H1 (cell line): ENCODE measurements at regions of chr22 and their contacts with region 1.

Region 1: GRCh38 chr22:36757668-36758211 is 18.2 kb downstream of the IFT27 start:
- DNase-seq: peak; percentile 63 to 92
- H3K4me3 ChIP-seq: no peak overlapping the region
- H3K27ac ChIP-seq: no peak overlapping the region
- H3K4me1 ChIP-seq: peaks cover 0 to 7% (median 0%) of the 10 kb centered on the region in 4 experiments; a peak in 2 of 7 replicates
- H3K27me3 ChIP-seq: peaks cover 0 to 3% (median 0%) of the 10 kb centered on the region in 4 experiments; a peak in 2 of 7 replicates
- CTCF ChIP-seq: peak; percentile 90 to 95 (median 95)
- EP300 ChIP-seq: no peak
- POLR2A ChIP-seq: no peak
- RAD21 ChIP-seq: peak; percentile 83 to 91

Region 2: DNA sequence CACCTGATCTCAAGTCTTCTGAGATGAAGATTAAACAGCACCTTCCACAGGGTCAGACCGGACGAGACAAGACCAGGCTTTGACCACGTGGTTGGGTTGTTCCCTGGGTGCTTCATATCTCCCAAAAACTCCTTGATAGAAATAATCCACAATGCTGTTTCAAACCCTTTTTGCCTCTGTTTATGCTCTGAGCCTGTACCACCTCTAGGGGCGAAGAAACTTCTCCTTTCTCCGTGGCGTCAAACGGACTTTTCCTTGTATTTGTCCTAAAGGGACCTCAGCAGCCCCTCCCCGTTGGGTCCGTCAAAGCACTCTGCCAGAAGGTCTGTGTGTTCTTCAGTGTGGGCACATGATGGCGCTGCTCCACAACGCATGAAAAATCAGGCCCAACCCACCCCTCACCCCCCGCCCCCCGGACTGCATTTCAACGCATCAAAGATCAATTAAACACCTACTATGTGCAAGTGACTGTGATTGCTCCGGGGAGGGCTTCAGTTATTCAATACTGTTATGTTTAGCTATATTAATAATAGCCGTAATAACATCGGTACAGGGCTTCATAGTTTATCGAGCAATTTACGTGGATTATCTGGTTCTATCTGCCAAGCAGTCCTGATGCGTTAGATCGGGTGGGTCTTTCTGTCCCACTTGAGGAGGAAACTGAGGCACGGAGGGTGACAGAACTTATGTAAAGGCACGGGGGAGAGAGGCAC is 211.5 kb before region 1 on chr22:
- CTCF ChIA-PET with region 1: interaction called, 43 read pairs
- POLR2A ChIA-PET with region 1: no interaction called
- DNase-seq: peak; percentile 51 to 65
- H3K4me3 ChIP-seq: peak overlapping the region in 1 of 4 experiments; percentile 18; a peak in 2 of 8 replicates
- H3K27ac ChIP-seq: no peak overlapping the region
- H3K4me1 ChIP-seq: peaks cover 0 to 12% (median 3%) of the 10 kb centered on the region in 4 experiments; a peak in 4 of 7 replicates
- H3K27me3 ChIP-seq: no peaks in the 10 kb centered on the region; a peak in 2 of 7 replicates
- CTCF ChIP-seq: peak; percentile 78 to 89 (median 81)
- EP300 ChIP-seq: no peak
- POLR2A ChIP-seq: no peak
- RAD21 ChIP-seq: peak; percentile 89 to 90

Region 3: DNA sequence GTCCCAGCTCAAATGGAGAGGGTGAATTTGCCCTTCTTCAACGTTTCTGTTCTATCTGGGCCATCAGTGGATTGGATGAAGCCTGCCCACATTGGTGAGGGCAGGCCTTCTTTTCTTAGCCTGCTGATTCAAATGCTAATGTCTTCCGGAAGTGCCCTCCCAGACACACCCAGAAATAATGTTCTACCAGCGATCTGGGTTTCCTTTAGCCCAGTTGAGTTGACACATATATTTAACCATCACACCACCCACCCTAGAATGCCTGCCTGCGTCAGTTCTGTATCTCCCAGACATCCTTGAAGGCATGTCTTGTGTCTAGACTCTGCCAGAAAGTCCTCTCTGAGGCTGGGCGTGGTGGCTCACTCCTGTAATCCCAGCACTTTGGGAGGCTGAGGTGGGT is 88.9 kb before region 1 on chr22:
- CTCF ChIA-PET with region 1: interaction called, 12 read pairs
- POLR2A ChIA-PET with region 1: no interaction called
- DNase-seq: no peak
- H3K4me3 ChIP-seq: no peak overlapping the region
- H3K27ac ChIP-seq: no peak overlapping the region
- H3K4me1 ChIP-seq: peaks cover 0 to 8% (median 0%) of the 10 kb centered on the region in 4 experiments; a peak in 1 of 7 replicates
- H3K27me3 ChIP-seq: no peaks in the 10 kb centered on the region
- CTCF ChIP-seq: no peak
- EP300 ChIP-seq: no peak
- POLR2A ChIP-seq: no peak
- RAD21 ChIP-seq: no peak

Region 4: DNA sequence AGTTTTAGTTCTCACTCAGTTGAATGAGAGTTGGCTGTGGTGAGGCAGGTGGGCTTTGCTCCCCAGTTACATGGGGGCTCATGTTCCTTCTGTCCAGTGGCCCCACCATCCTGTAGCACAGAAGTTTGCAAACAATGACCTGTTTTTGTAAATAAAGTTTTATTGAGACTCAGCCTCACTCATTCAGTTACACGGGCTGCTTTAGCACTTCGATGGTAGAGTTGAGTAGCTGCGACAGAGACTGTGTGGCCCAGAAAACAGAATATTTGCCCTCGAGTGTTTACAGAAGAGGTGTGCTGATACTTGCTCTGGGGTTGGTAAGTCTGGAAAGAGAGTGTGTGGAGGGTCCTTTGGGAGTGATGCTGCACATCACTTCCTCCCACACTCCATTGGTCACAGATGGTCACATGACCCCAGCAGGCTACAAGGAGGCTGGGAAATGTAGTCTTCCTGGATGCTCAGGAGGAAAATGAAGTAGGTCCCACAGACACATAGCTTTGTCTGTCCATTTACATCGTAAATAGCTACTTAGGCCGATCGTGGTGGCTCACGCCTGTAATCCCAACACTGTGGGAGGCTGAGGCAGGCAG is 16.4 kb before region 1 on chr22:
- CTCF ChIA-PET with region 1: interaction called, 60 read pairs
- POLR2A ChIA-PET with region 1: interaction called, 4 read pairs
- DNase-seq: no peak
- H3K4me3 ChIP-seq: no peak overlapping the region
- H3K27ac ChIP-seq: no peak overlapping the region
- H3K4me1 ChIP-seq: no peaks in the 10 kb centered on the region
- H3K27me3 ChIP-seq: peaks cover 0 to 7% (median 1%) of the 10 kb centered on the region in 4 experiments; a peak in 1 of 7 replicates
- CTCF ChIP-seq: no peak
- EP300 ChIP-seq: no peak
- POLR2A ChIP-seq: no peak
- RAD21 ChIP-seq: no peak

Region 5: DNA sequence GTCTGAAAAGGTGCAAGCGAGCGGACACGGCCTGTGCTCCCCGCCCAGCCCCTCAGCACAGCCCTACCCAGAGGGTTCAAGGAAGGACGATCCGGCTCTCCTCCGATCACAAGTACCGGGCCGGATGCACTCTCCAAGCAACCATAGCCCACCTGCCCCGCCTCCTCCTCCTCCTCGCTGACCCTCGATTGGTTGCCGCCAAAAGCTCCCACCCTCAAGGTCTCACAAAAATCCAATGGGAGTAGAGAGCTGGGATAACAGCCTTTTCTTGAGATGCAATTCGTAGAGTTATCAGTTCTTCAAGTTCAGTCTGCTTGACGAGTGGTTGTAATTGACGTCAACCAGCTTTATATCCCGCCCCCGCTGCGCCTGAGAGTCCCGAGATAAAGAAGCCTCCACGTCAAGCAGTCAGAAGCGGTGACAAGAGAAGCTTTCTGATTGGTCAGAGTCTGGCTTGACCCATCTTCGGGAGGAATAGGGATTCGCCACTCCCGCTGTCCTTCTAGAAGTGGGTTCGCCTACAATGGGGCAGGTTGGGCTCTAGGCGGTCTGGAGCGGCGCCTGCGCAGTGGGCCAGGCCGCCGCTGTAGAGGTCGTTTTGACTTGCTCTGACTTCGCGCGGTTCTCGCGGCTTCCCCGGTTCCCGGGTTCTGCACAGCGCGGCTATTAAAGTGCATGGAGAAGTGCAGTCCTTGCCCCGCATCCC is 18.4 kb after region 1 on chr22 and contains the start of gene IFT27:
- CTCF ChIA-PET with region 1: interaction called, 39 read pairs
- POLR2A ChIA-PET with region 1: interaction called, 3 read pairs
- DNase-seq: peak; percentile 92 to 98
- H3K4me3 ChIP-seq: peak within 1 kb of the TSS; percentile 80 to 96 (median 85)
- H3K27ac ChIP-seq: no peak within 1 kb of the TSS
- H3K4me1 ChIP-seq: peaks cover 0 to 4% (median 4%) of the 10 kb centered on the region in 4 experiments; a peak in 6 of 7 replicates
- H3K27me3 ChIP-seq: peaks cover 0 to 10% (median 7%) of the 10 kb centered on the region in 4 experiments; a peak in 4 of 7 replicates
- CTCF ChIP-seq: no peak
- EP300 ChIP-seq: no peak
- POLR2A ChIP-seq: peak in 1 of 2 experiments; percentile 59; a peak in 1 of 3 replicates
- RAD21 ChIP-seq: no peak
- total RNA-seq, gene IFT27: 44.0 and 46.2 TPM in 2 replicates

Region 6: GRCh38 chr22:36828815-36829214 is 71.1 kb after region 1 on chr22:
- CTCF ChIA-PET with region 1: no interaction called
- POLR2A ChIA-PET with region 1: no interaction called
- DNase-seq: no peak
- H3K4me3 ChIP-seq: no peak overlapping the region
- H3K27ac ChIP-seq: no peak overlapping the region
- H3K4me1 ChIP-seq: no peaks in the 10 kb centered on the region
- H3K27me3 ChIP-seq: no peaks in the 10 kb centered on the region; a peak in 1 of 7 replicates
- CTCF ChIP-seq: no peak
- EP300 ChIP-seq: no peak
- POLR2A ChIP-seq: no peak
- RAD21 ChIP-seq: no peak

Region 7: GRCh38 chr22:36914390-36914752 is 156.6 kb after region 1 on chr22:
- CTCF ChIA-PET with region 1: no interaction called
- POLR2A ChIA-PET with region 1: no interaction called
- DNase-seq: no peak
- H3K4me3 ChIP-seq: no peak overlapping the region
- H3K27ac ChIP-seq: no peak overlapping the region
- H3K4me1 ChIP-seq: peaks cover 4 to 13% (median 8%) of the 10 kb centered on the region in 4 experiments
- H3K27me3 ChIP-seq: peaks cover 10 to 45% (median 29%) of the 10 kb centered on the region in 4 experiments
- CTCF ChIP-seq: no peak
- EP300 ChIP-seq: no peak
- POLR2A ChIP-seq: no peak
- RAD21 ChIP-seq: no peak